ENCODE measurements at regions of chr11 and their contacts with region 1.

Region 1: GRCh38 chr11:130383344-130384211 is 44.8 kb downstream of the ADAMTS8 start:
- DNase-seq: peak; percentile 97
- H3K4me3 ChIP-seq: no peak overlapping the region
- H3K27ac ChIP-seq: peak overlapping the region; percentile 65
- H3K27me3 ChIP-seq: peaks cover 31% of the 10 kb centered on the region
- CTCF ChIP-seq: no peak

Region 2: GRCh38 chr11:130418756-130419155 is 35.2 kb after region 1 on chr11:
- CTCF ChIA-PET with region 1: no interaction called
- POLR2A ChIA-PET with region 1: interaction called, 10 read pairs
- DNase-seq: no peak
- H3K4me3 ChIP-seq: no peak overlapping the region
- H3K27ac ChIP-seq: peak overlapping the region; percentile 47
- H3K27me3 ChIP-seq: peaks cover 22% of the 10 kb centered on the region
- CTCF ChIP-seq: no peak

Measured in AG04450 (cell line).